Cardiac septum (tissue), 1 donor: ENCODE measurements at regions of chr10 and their contacts with region 1.

Region 1: GRCh38 chr10:29446327-29446726 is 157.5 kb downstream of the LYZL1 start:
- DNase-seq: no peak

Region 2: DNA sequence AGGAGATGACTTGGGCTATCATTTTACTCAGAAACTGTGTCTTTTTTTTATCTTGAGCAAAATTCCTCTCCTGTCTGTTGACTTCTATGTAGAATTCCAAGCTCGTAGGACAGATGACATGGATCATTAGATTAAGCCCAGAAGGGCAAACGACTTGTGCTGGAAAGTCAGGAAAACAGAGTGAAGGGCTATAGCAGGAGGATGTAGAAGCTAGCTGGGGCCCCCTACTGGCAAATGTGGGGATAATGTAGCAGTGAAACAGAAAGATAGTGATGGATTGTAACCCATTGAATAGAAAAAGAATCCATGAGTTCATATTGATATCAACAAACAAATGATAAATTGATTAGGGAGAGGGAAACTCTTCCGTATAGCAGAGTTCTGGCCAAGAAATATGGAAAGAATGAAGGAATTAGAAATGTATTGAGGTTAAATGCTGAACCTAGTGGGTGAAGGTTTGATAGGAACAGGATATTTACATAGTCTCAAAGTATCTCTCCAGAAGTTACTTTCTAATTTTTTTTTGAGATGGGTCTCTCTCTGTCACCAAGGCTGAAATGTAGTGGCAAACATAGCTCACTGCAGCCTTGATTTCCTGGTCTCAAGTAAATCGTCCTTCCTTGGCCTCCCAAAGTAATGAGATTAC is 53.8 kb before region 1 on chr10:
- intact Hi-C with region 1: loop called (anchors 5 kb)
- DNase-seq: no peak